ENCODE measurements at regions of chr19 and their contacts with region 1.

Region 1: DNA sequence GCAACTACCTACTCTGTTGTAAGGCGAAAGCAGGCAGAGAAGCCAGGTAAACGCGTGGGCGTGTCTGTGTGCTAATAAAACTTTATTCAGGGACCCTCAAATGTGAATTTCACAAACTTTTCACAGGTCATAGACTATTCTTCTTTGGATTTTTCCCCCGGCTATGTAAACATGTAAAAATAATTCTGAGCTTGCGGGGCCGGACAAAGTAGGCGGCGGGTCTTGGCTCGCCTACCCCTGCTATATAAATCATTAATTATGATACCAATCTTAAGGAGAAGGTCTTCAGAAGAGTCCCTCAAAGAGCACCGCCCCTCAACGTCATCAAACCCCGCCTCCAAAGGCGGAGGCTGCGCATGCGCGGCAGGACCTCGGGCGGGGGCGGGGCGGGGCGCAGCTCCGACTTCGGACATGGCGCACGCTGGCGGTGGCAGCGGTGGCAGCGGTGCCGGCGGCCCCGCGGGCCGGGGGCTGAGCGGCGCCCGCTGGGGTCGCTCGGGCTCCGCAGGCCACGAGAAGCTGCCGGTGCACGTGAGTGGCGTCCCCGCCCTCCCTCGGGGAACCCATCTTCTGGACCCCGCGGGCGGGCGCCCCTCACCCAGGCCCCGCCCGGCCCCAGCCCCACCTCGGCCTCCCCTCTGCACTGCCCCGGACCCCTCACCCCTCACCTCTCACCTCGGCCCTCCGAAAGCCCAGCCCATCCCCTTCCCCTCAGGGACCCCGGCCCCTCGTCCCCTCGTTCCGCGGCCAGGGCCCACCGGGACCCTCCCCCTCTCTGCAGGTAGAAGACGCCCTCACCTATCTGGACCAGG is at the start of gene SIN3B:
- DNase-seq: peak; percentile 87 to 96
- ATAC-seq: peak; percentile 91
- H3K4me3 ChIP-seq: peak within 1 kb of the TSS; percentile 95 to 96
- H3K27ac ChIP-seq: no peak within 1 kb of the TSS
- H3K4me1 ChIP-seq: peaks cover 0 to 2% of the 10 kb centered on the region in 2 donors
- H3K27me3 ChIP-seq: no peaks in the 10 kb centered on the region
- total RNA-seq, gene SIN3B: 61.1 to 82.7 TPM

Region 2: DNA sequence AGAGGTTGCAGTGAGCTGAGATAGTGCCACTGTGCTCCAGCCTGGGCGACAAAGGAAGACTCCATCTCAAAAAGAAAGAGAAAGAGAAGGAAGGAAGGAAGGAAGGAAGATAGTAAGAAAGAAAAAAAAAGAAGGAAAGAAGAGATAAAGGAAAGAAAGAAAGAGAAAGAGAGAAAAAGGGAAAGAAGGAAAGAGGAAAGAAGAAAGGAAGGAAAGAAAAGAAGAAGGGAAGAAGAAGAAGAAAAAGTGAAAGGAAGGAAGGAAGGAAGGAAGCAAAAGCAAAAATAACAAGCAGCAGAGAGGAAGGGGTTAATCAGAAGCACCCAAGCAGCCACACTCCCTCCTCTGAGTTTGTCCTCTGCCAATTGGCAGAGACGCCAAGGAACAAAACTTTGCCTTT is 77.5 kb before region 1 on chr19:
- intact Hi-C with region 1: no loop called
- DNase-seq: no peak
- ATAC-seq: no peak
- H3K4me3 ChIP-seq: no peak overlapping the region
- H3K27ac ChIP-seq: no peak overlapping the region
- H3K4me1 ChIP-seq: no peaks in the 10 kb centered on the region
- H3K27me3 ChIP-seq: no peaks in the 10 kb centered on the region

Region 3: DNA sequence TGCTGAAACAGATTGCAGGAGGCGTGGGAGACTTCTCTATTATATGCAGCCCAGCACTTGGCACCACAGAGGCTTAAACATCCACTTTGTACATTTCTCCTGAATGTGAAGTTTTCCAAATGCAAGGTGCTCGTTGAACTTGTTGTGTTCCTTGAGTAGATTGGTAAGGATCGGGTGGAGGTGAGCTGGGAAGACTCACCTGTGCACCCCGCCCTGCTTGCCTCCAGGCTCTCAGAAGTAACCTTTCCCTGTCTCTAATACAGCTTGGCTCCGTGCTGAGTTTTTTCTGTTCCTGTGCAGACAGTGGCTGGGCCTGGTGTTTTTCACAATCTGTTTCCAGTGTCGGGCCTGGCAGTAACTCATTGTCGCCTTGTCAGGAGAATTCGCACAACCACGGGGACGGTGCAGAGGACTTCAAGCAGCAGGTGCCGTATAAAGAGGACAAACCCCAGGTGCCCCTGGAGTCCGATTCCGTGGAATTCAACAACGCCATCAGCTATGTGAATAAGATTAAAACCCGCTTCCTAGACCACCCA is 12.2 kb after region 1 on chr19:
- intact Hi-C with region 1: no loop called
- DNase-seq: no peak
- ATAC-seq: no peak
- H3K4me3 ChIP-seq: no peak overlapping the region
- H3K27ac ChIP-seq: no peak overlapping the region
- H3K4me1 ChIP-seq: no peaks in the 10 kb centered on the region
- H3K27me3 ChIP-seq: no peaks in the 10 kb centered on the region

Region 4: DNA sequence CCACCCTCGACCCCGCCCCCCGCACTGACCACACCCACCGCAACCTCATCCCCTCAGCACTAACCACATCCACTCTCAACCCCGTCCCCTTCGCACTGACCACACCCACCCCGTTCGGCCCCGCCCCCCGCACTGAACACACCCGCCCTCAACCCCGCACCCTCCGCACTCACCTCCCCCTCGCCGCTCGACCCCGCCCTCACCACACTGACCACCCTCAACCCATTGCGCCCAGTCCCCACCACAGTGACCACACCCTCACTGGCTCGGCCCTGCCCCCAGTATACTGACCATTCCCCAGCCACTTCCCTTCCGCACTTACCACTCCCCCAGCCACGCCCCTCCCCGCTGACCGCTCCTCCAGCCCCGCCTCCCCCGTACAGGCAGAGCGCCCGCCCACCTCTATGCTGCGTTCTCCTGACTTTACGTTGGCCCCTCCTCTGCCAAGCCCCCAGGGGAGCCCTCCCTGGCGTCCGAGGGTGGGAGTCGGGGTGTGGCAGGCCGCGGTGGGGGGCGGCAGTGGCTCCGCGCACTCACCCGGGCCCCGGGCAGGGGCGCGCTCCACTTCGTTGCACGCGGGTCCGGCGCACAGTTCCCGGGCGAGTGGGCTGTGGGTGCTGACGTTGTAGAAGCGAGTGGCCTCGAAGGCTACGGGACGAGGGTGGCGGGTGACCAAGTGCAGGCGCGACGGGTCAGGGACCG is 68.1 kb after region 1 on chr19:
- intact Hi-C with region 1: loop called in 1 of 2 experiments (anchors 5 kb)
- DNase-seq: peak; percentile 97 to 98
- ATAC-seq: peak; percentile 93
- H3K4me3 ChIP-seq: peak overlapping the region; percentile 28
- H3K27ac ChIP-seq: peak overlapping the region in 1 of 2 donors; percentile 8
- H3K4me1 ChIP-seq: no peaks in the 10 kb centered on the region
- H3K27me3 ChIP-seq: no peaks in the 10 kb centered on the region